Activated T-helper 2 cell treated with anti-CD3 and anti-CD28 coated beads, Interferon-gamma antibody, Interleukin-2, Interleukin-4, amounts not matched to agents 10 μg/mL and 5 μg/mL and 100 μg/mL, durations not matched to agents 14 hours and 24 hours and 36 hours (primary cell): ENCODE measurements at regions of chr11 and their contacts with region 1.

Region 1: DNA sequence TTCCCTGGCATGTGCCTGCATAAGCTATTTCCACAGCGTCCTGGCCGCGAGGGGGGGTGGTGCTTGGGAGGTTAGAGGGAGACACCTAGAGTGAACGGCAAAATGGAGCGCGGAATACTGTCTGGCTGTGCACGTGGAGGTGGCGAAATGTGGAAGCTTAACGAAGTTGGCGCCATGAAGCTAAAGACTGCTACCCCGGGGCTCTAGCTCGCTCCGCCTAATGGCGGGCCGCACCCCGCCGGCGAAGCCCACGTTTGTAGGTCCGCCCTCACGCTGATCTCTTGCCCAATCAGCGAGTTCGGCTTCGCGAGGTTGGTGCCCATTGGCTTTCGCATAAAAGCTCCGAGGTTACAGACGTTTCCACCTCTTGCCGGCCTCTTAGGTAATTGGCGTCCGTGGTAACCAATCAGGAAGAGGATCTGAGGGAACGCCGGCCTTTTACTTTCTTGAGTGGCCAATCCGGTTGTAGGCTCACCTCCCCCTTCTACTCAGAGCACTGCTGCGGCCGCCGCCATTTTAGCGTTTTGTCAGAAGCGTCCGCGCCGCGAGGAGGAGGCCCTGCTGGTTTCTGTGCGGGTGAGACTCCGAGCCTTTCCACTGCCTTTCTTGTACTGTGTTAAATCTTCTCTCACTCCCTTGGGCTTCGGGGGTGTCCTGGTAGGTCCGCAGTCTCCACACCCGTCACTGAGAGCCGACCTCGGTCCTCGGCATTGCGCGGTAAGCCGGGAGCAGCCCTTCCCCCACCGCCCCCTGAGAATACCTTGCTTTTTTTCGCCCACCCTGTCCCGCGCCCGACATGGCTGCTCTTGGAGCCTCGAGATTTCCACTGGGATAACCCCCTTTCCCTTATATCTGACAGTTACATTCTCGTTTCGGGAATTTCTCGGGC is at the start of gene RBM4:
- DNase-seq: peak; percentile 98
- H3K4me3 Mint-ChIP-seq: peak within 1 kb of the TSS; percentile 97
- H3K27ac Mint-ChIP-seq: peak within 1 kb of the TSS; percentile 93
- H3K4me1 Mint-ChIP-seq: peaks cover 53% of the 10 kb centered on the region
- H3K27me3 Mint-ChIP-seq: no peaks in the 10 kb centered on the region
- total RNA-seq, gene RBM4: 125 and 129 TPM in 2 replicates

Region 2: DNA sequence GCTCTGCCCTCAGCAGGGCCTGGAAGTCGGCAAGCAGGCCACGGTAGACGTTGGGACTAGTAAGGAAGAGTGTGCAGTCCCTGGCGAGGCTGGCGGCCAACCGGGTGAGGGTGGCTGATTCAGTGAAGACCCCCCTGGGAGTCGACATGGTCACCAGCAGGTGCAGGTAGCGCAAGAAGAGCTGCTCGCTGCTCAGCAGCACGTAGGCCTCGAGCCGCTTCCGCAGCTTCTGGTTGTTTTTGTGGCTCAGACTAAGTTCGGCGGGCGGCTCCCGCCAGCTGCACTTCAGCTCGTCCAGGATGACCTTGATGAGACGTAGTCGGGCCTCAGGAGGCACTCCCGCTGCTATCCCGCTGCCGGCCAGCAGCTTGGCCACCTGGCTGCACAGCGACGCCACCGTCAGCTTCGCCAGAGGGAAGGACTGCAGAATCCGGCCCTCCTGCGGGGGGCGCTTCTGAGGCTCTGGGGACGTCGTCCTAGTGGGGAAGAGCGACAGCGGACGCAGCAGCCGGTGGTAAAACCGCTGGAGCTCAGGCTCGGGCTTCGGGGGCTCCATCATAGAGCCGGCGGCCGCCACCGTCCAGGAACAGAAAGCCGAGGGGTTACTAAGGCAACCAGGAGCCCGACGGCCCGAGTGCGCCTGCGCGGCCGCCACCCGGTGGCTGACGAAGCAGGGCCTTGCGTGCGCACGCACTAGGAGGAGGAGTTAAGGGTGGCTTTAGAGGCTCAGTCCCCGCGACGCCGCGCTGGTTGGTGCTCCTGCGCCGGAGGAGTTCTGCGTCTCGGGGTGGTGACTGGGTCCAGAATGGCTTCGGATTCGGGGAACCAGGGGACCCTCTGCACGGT is 45.7 kb before region 1 on chr11 and contains the starts of genes CCDC87 and CCS:
- intact Hi-C with region 1: loop called (anchors 2 kb)
- DNase-seq: peak; percentile 96
- H3K4me3 Mint-ChIP-seq: peak within 1 kb of the TSS; percentile 98
- H3K27ac Mint-ChIP-seq: peak within 1 kb of the TSS; percentile 94
- H3K4me1 Mint-ChIP-seq: peaks cover 16% of the 10 kb centered on the region
- H3K27me3 Mint-ChIP-seq: no peaks in the 10 kb centered on the region
- total RNA-seq, gene CCDC87: 0.09 and 0.14 TPM in 2 replicates
- total RNA-seq, gene CCS: 30.4 and 31.1 TPM in 2 replicates

Region 3: GRCh38 chr11:66677599-66678375 is 39.4 kb after region 1 on chr11 and contains the start of gene RBM4B:
- intact Hi-C with region 1: loop called (anchors 2 kb)
- DNase-seq: peak; percentile 92
- H3K4me3 Mint-ChIP-seq: peak within 1 kb of the TSS; percentile 92
- H3K27ac Mint-ChIP-seq: peak within 1 kb of the TSS; percentile 97
- H3K4me1 Mint-ChIP-seq: peaks cover 30% of the 10 kb centered on the region
- H3K27me3 Mint-ChIP-seq: no peaks in the 10 kb centered on the region
- total RNA-seq, gene RBM4B: 16.5 and 18.4 TPM in 2 replicates